Kidney (tissue), 22 donors: ENCODE measurements at regions of chr5 and their contacts with region 1.

Region 1: GRCh38 chr5:138449501-138450239 is 10.8 kb downstream of the REEP2 start:
- DNase-seq: peak; percentile 91 to 94 (median 92)
- H3K4me3 ChIP-seq: peak overlapping the region in 1 of 3 donors; percentile 3
- H3K27ac ChIP-seq: no peak overlapping the region
- H3K4me1 ChIP-seq: peaks cover 0 to 4% (median 0%) of the 10 kb centered on the region in 3 donors
- H3K27me3 ChIP-seq: no peaks in the 10 kb centered on the region
- CTCF ChIP-seq: peak; percentile 97

Region 2: GRCh38 chr5:138503487-138504270 is 54.0 kb after region 1 on chr5:
- intact Hi-C with region 1: loop called (anchors 5 kb)
- DNase-seq: peak in 3 of 5 donors; percentile 41 to 80 (median 75)
- H3K4me3 ChIP-seq: no peak overlapping the region
- H3K27ac ChIP-seq: no peak overlapping the region
- H3K4me1 ChIP-seq: no peaks in the 10 kb centered on the region
- H3K27me3 ChIP-seq: no peaks in the 10 kb centered on the region
- CTCF ChIP-seq: peak; percentile 76